ENCODE measurements at regions of chr1 and their contacts with region 1.

Region 1: GRCh38 chr1:100936194-100936967 is 40.5 kb downstream of the SLC30A7 start:
- DNase-seq: no peak
- ATAC-seq: no peak
- H3K4me3 ChIP-seq: no peak overlapping the region
- H3K27ac ChIP-seq: no peak overlapping the region
- H3K4me1 ChIP-seq: peaks cover 0 to 7% of the 10 kb centered on the region in 2 donors
- H3K27me3 ChIP-seq: no peaks in the 10 kb centered on the region
- CTCF ChIP-seq: no peak
- POLR2A ChIP-seq: no peak

Region 2: GRCh38 chr1:101071470-101071891 is 135.1 kb after region 1 on chr1:
- in situ Hi-C with region 1: no loop called
- intact Hi-C with region 1: no loop called
- DNase-seq: no peak
- ATAC-seq: no peak
- H3K4me3 ChIP-seq: no peak overlapping the region
- H3K27ac ChIP-seq: peak overlapping the region in 2 of 4 donors; percentile 4 to 5
- H3K4me1 ChIP-seq: peaks cover 6 to 13% of the 10 kb centered on the region in 2 donors
- H3K27me3 ChIP-seq: no peaks in the 10 kb centered on the region
- CTCF ChIP-seq: no peak
- POLR2A ChIP-seq: no peak

Region 3: GRCh38 chr1:101295209-101295608 is 358.8 kb after region 1 on chr1:
- in situ Hi-C with region 1: no loop called
- intact Hi-C with region 1: loop called (anchors 5 kb)
- DNase-seq: no peak
- ATAC-seq: no peak
- H3K4me3 ChIP-seq: no peak overlapping the region
- H3K27ac ChIP-seq: no peak overlapping the region
- H3K4me1 ChIP-seq: no peaks in the 10 kb centered on the region
- H3K27me3 ChIP-seq: no peaks in the 10 kb centered on the region
- CTCF ChIP-seq: no peak
- POLR2A ChIP-seq: no peak